A549 (cell line): ENCODE measurements at regions of chr11 and their contacts with region 1.

Region 1: GRCh38 chr11:6353367-6353987 is 33.2 kb upstream of the CAVIN3 start:
- DNase-seq: peak; percentile 46 to 79
- ATAC-seq: peak; percentile 56 to 86; a peak in 5 of 6 replicates
- H3K4me3 ChIP-seq: no peak overlapping the region
- H3K27ac ChIP-seq: 0 out of 6 replicates have a peak overlapping the region, but pooled peaks of 1 of the 2 experiments have one; percentile 28
- H3K4me1 ChIP-seq: peaks cover 22% of the 10 kb centered on the region
- CTCF ChIP-seq: peak; percentile 96
- EP300 ChIP-seq: no peak
- POLR2A ChIP-seq: no peak
- RAD21 ChIP-seq: peak; percentile 92 to 95

Region 2: DNA sequence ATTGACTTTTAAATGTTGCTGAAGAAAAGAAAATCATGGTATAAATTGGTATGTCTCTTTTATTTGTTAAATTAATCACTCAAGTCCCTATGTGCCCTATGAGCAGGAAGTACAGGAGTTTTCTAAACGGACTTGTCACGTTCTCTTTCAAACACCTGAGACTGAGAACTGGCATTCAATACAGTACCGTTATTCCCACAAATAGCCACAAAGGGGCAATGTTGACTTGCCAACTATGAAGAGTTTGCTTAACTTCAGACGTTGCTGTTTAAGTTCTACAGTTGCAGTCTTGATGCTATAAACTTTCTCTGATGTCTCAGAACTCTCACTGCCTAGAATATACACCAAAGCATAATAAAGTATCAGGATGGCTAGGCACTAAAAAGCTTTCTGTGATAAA is 330.5 kb before region 1 on chr11:
- CTCF ChIA-PET with region 1: interaction called, 34 read pairs
- POLR2A ChIA-PET with region 1: no interaction called
- DNase-seq: peak; percentile 13 to 57
- ATAC-seq: peak; percentile 82
- H3K4me3 ChIP-seq: no peak overlapping the region
- H3K27ac ChIP-seq: no peak overlapping the region
- H3K4me1 ChIP-seq: no peaks in the 10 kb centered on the region
- CTCF ChIP-seq: peak; percentile 46
- EP300 ChIP-seq: no peak
- POLR2A ChIP-seq: no peak
- RAD21 ChIP-seq: peak; percentile 61 to 68

Region 3: DNA sequence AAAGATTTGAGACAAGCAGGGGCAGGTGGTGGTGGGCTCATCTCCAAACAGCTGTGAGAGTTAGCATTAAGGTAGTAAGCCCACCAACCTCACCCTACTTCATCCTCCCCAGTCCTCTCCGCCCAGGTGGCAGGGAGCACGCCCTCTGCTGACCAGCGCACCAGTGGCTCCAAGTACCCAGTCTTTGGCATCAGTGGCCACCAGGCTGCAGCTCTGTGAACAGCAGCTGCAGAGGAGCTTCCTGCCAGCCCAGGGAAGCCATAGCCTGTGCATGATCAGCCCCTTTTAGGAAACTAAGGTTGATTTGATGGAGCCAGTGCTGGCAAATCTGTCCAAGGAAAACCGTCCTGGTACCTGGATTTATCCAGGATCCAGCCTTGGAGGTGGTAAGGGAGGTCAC is 54.9 kb before region 1 on chr11:
- CTCF ChIA-PET with region 1: interaction called, 14 read pairs
- POLR2A ChIA-PET with region 1: no interaction called
- DNase-seq: peak; percentile 50 to 72
- ATAC-seq: peak; percentile 99 to 100
- H3K4me3 ChIP-seq: no peak overlapping the region
- H3K27ac ChIP-seq: no peak overlapping the region
- H3K4me1 ChIP-seq: no peaks in the 10 kb centered on the region
- CTCF ChIP-seq: peak; percentile 50
- EP300 ChIP-seq: no peak
- POLR2A ChIP-seq: no peak
- RAD21 ChIP-seq: peak; percentile 32 to 37; a peak in 4 of 5 replicates

Region 4: DNA sequence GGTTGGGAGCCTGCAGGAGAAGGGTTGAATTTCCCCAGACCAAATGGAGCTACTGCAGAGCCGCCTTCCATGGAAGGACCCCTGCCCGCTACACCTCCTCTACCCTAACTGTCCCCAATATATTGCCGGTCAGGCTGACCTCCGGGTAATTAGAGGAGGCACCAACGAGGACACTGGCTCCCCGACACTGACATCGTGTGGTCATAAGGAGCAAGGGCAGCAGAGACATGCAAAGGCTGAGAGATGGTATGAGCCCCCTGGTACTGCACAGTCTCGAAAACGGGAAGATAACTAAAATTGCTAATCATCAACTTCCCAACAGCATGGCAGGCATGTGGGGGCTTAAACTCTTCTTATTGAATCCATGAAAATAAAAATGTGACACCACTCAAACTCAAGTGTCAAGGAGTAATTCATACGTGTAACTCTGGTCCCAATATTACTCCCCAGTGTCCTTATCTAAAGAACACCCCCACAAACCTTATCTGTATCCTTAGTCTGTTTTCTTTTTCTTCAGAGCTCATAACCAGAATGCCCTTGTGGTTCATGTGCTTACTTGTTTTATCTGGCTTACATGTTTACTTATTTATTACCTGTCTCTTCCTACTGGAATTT is 37.6 kb before region 1 on chr11:
- CTCF ChIA-PET with region 1: interaction called, 19 read pairs
- POLR2A ChIA-PET with region 1: interaction called, 5 read pairs
- DNase-seq: peak; percentile 58 to 82
- ATAC-seq: peak; percentile 62 to 75
- H3K4me3 ChIP-seq: no peak overlapping the region
- H3K27ac ChIP-seq: no peak overlapping the region
- H3K4me1 ChIP-seq: peaks cover 5% of the 10 kb centered on the region; the same call in 2 of the 3 replicates
- CTCF ChIP-seq: peak; percentile 65
- EP300 ChIP-seq: no peak
- POLR2A ChIP-seq: no peak
- RAD21 ChIP-seq: peak; percentile 69 to 74